PC-9 (cell line): ENCODE measurements at regions of chr9 and their contacts with region 1.

Region 1: GRCh38 chr9:76458903-76459690 is at the start of gene GCNT1:
- DNase-seq: peak; percentile 82 to 99
- H3K4me3 ChIP-seq: peak within 1 kb of the TSS; percentile 70
- H3K27ac ChIP-seq: peak within 1 kb of the TSS; percentile 23
- H3K4me1 ChIP-seq: peaks cover 24% of the 10 kb centered on the region
- H3K27me3 ChIP-seq: no peaks in the 10 kb centered on the region
- CTCF ChIP-seq: peak; percentile 60; the same call in 1 of the 2 replicates
- total RNA-seq, gene GCNT1: 14.0 and 15.3 TPM in 2 replicates

Region 2: DNA sequence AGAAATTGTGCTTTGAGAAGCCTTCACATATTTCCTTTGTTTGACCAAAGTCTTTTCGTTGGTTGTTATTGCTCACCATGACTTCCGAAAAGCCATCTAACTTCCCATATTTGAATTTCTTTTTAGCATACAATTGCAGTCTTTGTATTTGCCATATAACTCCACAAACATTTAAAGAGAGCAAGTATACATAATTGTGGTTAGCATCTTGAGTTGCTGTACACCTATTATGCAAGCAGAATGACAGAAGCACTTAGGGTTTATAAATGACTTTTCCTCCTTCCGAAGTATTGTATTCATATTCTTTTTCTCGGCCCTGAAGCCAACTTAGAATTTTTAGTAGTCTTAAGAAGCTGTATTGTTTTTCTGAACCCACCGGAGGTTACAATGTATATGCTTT is 315.3 kb before region 1 on chr9:
- CTCF ChIA-PET with region 1: no interaction called
- POLR2A ChIA-PET with region 1: interaction called, 14 read pairs
- intact Hi-C with region 1: no loop called
- DNase-seq: no peak
- H3K4me3 ChIP-seq: no peak overlapping the region
- H3K27ac ChIP-seq: no peak overlapping the region
- H3K4me1 ChIP-seq: no peaks in the 10 kb centered on the region
- H3K27me3 ChIP-seq: no peaks in the 10 kb centered on the region
- CTCF ChIP-seq: no peak

Region 3: DNA sequence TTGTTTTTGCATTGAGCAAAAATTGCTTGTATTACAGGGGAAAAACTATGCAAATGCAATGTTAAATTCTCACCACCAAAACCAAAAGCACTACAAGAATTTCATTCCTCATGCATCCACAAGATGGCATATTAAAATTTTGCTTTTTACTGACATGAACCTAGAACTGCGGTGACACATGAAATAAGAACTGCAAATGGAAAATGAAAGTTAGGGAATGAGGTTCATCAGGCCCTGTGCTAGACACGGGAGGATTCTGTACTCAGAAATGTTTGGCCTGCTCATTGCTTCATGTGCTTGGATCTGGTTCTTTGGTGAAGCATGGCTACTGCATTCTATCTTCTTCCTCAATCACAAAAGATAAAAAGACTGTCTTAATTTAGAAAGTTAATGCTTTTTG is 55.7 kb before region 1 on chr9:
- CTCF ChIA-PET with region 1: no interaction called
- POLR2A ChIA-PET with region 1: interaction called, 3 read pairs
- intact Hi-C with region 1: loop called (anchors 2 kb)
- DNase-seq: peak in 1 of 2 experiments; percentile 68
- H3K4me3 ChIP-seq: 0 out of 2 replicates have a peak overlapping the region, but pooled peaks have one; percentile 15
- H3K27ac ChIP-seq: no peak overlapping the region
- H3K4me1 ChIP-seq: peaks cover 37% of the 10 kb centered on the region
- H3K27me3 ChIP-seq: no peaks in the 10 kb centered on the region
- CTCF ChIP-seq: peak; percentile 58; the same call in 1 of the 2 replicates

Region 4: GRCh38 chr9:76502746-76503145 is 43.6 kb after region 1 on chr9:
- CTCF ChIA-PET with region 1: no interaction called
- POLR2A ChIA-PET with region 1: no interaction called
- intact Hi-C with region 1: no loop called
- DNase-seq: no peak
- H3K4me3 ChIP-seq: no peak overlapping the region
- H3K27ac ChIP-seq: no peak overlapping the region
- H3K4me1 ChIP-seq: no peaks in the 10 kb centered on the region
- H3K27me3 ChIP-seq: no peaks in the 10 kb centered on the region
- CTCF ChIP-seq: no peak

Region 5: GRCh38 chr9:76516350-76516749 is 57.3 kb after region 1 on chr9:
- CTCF ChIA-PET with region 1: no interaction called
- POLR2A ChIA-PET with region 1: interaction called, 4 read pairs
- intact Hi-C with region 1: loop called (anchors 1 kb)
- DNase-seq: no peak
- H3K4me3 ChIP-seq: no peak overlapping the region
- H3K27ac ChIP-seq: no peak overlapping the region
- H3K4me1 ChIP-seq: peaks cover 28% of the 10 kb centered on the region
- H3K27me3 ChIP-seq: no peaks in the 10 kb centered on the region
- CTCF ChIP-seq: no peak

Region 6: GRCh38 chr9:76545191-76545590 is 86.1 kb after region 1 on chr9:
- CTCF ChIA-PET with region 1: no interaction called
- POLR2A ChIA-PET with region 1: interaction called, 10 read pairs
- intact Hi-C with region 1: no loop called
- DNase-seq: no peak
- H3K4me3 ChIP-seq: no peak overlapping the region
- H3K27ac ChIP-seq: no peak overlapping the region
- H3K4me1 ChIP-seq: 0 out of 2 replicates have a peak, but pooled peaks cover 5% of the 10 kb centered on the region
- H3K27me3 ChIP-seq: no peaks in the 10 kb centered on the region
- CTCF ChIP-seq: no peak

Region 7: GRCh38 chr9:76576344-76576743 is 117.2 kb after region 1 on chr9:
- CTCF ChIA-PET with region 1: no interaction called
- POLR2A ChIA-PET with region 1: interaction called, 7 read pairs
- intact Hi-C with region 1: loop called (anchors 1 kb)
- DNase-seq: no peak
- H3K4me3 ChIP-seq: peak overlapping the region; percentile 54; the same call in 1 of the 2 replicates
- H3K27ac ChIP-seq: peak overlapping the region; percentile 88; the same call in 1 of the 2 replicates
- H3K4me1 ChIP-seq: peaks cover 14% of the 10 kb centered on the region
- H3K27me3 ChIP-seq: no peaks in the 10 kb centered on the region
- CTCF ChIP-seq: no peak